B cell (primary cell): ENCODE measurements at regions of chr11 and their contacts with region 1.

Region 1: DNA sequence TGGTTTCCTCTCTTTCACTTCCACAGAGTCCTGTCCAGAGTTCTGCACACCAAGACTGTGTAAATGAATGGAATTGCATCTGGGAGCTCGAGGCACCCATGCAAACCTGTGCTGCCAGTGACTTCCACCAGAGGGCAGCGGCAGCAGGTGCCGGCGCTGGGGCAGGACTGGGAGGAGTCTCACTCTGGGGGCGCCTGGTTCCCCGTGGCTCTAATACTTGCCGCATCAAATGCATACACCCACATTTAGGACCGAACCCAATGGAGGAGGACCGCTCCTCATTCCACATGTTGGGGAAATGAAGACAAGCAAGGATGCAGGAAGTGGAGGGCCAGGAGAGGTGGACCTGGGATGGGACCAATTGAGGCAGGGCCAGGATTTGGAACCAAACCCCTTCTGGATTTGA is 1.1 kb upstream of the CD6 start:
- DNase-seq: peak; percentile 83
- ATAC-seq: peak; percentile 91
- H3K4me3 ChIP-seq: peak overlapping the region in 1 of 5 experiments; percentile 5
- H3K4me3 Mint-ChIP-seq: peak overlapping the region; percentile 79
- H3K27ac ChIP-seq: no peak overlapping the region
- H3K27ac Mint-ChIP-seq: peak overlapping the region; percentile 71
- H3K4me1 ChIP-seq: peaks cover 27 to 32% of the 10 kb centered on the region in 2 donors
- H3K4me1 Mint-ChIP-seq: peaks cover 34% of the 10 kb centered on the region
- H3K27me3 ChIP-seq: no peaks in the 10 kb centered on the region
- H3K27me3 Mint-ChIP-seq: no peaks in the 10 kb centered on the region
- CTCF ChIP-seq: peak; percentile 94

Region 2: DNA sequence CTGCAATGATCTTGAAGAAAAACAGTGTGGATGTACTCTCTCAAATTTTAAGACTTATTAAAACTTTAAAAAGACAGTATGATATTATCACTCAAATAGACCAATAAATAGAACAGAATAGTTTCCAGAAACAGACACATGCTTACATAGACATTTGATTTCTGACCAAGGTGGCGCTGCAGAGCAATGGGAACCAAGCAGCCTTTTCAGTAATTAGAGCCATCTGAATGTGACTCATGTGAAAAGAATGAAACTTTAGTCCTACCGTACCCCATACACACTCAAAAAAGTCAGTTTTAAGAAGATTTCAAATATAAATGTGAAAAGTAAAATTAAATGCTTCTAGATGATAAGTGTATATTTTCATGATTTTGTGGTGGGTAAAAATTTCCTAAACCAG is 345.1 kb before region 1 on chr11:
- CTCF ChIA-PET with region 1: no interaction called
- POLR2A ChIA-PET with region 1: no interaction called
- intact Hi-C with region 1: no loop called
- DNase-seq: no peak
- ATAC-seq: no peak
- H3K4me3 ChIP-seq: no peak overlapping the region
- H3K4me3 Mint-ChIP-seq: no peak overlapping the region
- H3K27ac ChIP-seq: no peak overlapping the region
- H3K27ac Mint-ChIP-seq: no peak overlapping the region
- H3K4me1 ChIP-seq: no peaks in the 10 kb centered on the region
- H3K4me1 Mint-ChIP-seq: peaks cover 7% of the 10 kb centered on the region
- H3K27me3 ChIP-seq: no peaks in the 10 kb centered on the region
- H3K27me3 Mint-ChIP-seq: no peaks in the 10 kb centered on the region
- CTCF ChIP-seq: no peak

Region 3: DNA sequence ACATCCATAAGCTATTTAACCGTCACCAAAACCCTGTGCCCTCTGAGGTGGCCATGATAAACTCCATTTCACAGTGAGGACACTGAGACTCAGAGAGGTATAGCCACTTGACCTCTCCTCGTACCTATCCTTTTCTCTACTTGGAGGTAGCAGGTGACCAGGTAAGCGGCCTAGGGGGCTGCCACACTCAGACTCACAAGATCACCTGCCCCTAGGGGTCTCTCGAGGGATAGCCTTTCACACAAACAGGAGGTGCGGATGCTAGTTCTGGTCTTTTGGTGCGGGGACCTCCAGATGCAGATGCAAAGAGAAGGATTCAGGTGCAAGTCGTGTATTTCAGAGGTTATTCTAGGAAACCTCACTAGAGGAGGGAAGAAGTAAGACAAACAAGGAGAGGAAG is 231.3 kb before region 1 on chr11:
- CTCF ChIA-PET with region 1: no interaction called
- POLR2A ChIA-PET with region 1: no interaction called
- intact Hi-C with region 1: no loop called
- DNase-seq: no peak
- ATAC-seq: no peak
- H3K4me3 ChIP-seq: no peak overlapping the region
- H3K4me3 Mint-ChIP-seq: no peak overlapping the region
- H3K27ac ChIP-seq: no peak overlapping the region
- H3K27ac Mint-ChIP-seq: no peak overlapping the region
- H3K4me1 ChIP-seq: no peaks in the 10 kb centered on the region
- H3K4me1 Mint-ChIP-seq: no peaks in the 10 kb centered on the region
- H3K27me3 ChIP-seq: peaks cover 0 to 8% (median 0%) of the 10 kb centered on the region in 4 experiments
- H3K27me3 Mint-ChIP-seq: peaks cover 29% of the 10 kb centered on the region
- CTCF ChIP-seq: no peak

Region 4: GRCh38 chr11:60951899-60952741 is 18.3 kb before region 1 on chr11 and contains the start of gene SLC15A3:
- CTCF ChIA-PET with region 1: interaction called, 7 read pairs
- POLR2A ChIA-PET with region 1: interaction called, 13 read pairs
- intact Hi-C with region 1: loop called (anchors 2 kb)
- DNase-seq: peak; percentile 91
- ATAC-seq: peak; percentile 88
- H3K4me3 ChIP-seq: peak within 1 kb of the TSS; percentile 53 to 99 (median 81)
- H3K4me3 Mint-ChIP-seq: peak within 1 kb of the TSS; percentile 90
- H3K27ac ChIP-seq: peak within 1 kb of the TSS; percentile 91 to 98
- H3K27ac Mint-ChIP-seq: peak within 1 kb of the TSS; percentile 94
- H3K4me1 ChIP-seq: peaks cover 48 to 62% of the 10 kb centered on the region in 2 donors
- H3K4me1 Mint-ChIP-seq: peaks cover 55% of the 10 kb centered on the region
- H3K27me3 ChIP-seq: no peaks in the 10 kb centered on the region
- H3K27me3 Mint-ChIP-seq: no peaks in the 10 kb centered on the region
- CTCF ChIP-seq: no peak
- total RNA-seq, gene SLC15A3: 91.4 and 93.0 TPM in 2 replicates

Region 5: DNA sequence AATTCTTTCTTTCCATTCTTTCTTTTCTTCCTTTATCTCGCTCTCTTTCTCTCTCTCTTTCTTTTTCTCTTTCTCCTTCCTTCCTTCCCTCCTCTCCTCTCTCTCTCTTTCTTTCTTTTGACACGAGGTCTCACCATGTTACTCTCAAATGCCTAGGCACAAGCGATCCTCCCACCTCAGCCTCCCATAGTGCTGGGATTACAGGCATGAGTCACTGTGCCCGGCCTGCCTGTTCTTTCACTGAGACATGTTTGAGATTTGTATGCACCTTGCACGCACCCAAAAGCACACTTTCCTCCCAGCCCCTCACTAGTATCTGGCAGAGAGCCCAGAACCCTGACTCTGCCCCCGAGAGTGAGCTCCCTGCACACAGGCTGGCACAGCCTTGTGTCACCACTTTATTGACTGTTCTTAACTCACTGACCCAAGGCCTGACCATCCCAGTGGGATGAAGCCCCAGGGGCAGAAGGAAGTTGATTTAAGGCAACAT is 57.9 kb after region 1 on chr11:
- CTCF ChIA-PET with region 1: interaction called, 13 read pairs
- POLR2A ChIA-PET with region 1: no interaction called
- intact Hi-C with region 1: no loop called
- DNase-seq: peak; percentile 62
- ATAC-seq: peak; percentile 88
- H3K4me3 ChIP-seq: no peak overlapping the region
- H3K4me3 Mint-ChIP-seq: peak overlapping the region; percentile 67
- H3K27ac ChIP-seq: no peak overlapping the region
- H3K27ac Mint-ChIP-seq: peak overlapping the region; percentile 76
- H3K4me1 ChIP-seq: peaks cover 40 to 45% of the 10 kb centered on the region in 2 donors
- H3K4me1 Mint-ChIP-seq: peaks cover 48% of the 10 kb centered on the region
- H3K27me3 ChIP-seq: no peaks in the 10 kb centered on the region
- H3K27me3 Mint-ChIP-seq: no peaks in the 10 kb centered on the region
- CTCF ChIP-seq: no peak

Region 6: DNA sequence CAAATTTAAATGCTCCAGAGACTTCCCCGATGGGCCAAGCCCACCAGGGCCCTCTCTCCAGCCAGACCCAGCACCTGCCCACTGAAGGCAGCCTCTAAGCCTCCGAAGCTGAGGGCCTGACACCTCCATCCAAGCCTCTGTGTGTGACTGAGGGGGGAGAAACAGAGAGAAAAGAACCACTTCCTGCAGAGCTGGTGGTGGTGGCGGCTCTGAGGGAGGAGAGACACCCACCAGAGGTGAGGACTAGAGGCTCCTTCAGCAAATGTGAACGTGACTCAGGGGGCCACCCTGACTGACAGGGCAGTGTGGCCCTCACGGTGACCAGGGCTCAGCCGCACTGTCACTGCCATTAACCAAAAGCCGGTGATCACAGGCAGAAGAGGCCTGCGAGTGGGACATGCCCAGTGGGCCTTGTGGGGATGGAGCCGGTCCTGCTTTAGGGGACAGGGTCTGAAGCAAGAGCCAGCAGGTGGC is 100.9 kb after region 1 on chr11:
- CTCF ChIA-PET with region 1: interaction called, 23 read pairs
- POLR2A ChIA-PET with region 1: interaction called, 4 read pairs
- intact Hi-C with region 1: loop called (anchors 1 kb)
- DNase-seq: peak; percentile 61
- ATAC-seq: peak; percentile 50
- H3K4me3 ChIP-seq: peak overlapping the region in 1 of 5 experiments; percentile 15
- H3K4me3 Mint-ChIP-seq: peak overlapping the region; percentile 68
- H3K27ac ChIP-seq: peak overlapping the region; percentile 91 to 98
- H3K27ac Mint-ChIP-seq: peak overlapping the region; percentile 97
- H3K4me1 ChIP-seq: peaks cover 40 to 49% of the 10 kb centered on the region in 2 donors
- H3K4me1 Mint-ChIP-seq: peaks cover 71% of the 10 kb centered on the region
- H3K27me3 ChIP-seq: no peaks in the 10 kb centered on the region
- H3K27me3 Mint-ChIP-seq: no peaks in the 10 kb centered on the region
- CTCF ChIP-seq: no peak

Region 7: GRCh38 chr11:61187505-61188130 is 217.2 kb after region 1 on chr11:
- CTCF ChIA-PET with region 1: interaction called, 53 read pairs
- POLR2A ChIA-PET with region 1: no interaction called
- intact Hi-C with region 1: no loop called
- DNase-seq: peak; percentile 89
- ATAC-seq: peak; percentile 98
- H3K4me3 ChIP-seq: no peak overlapping the region
- H3K4me3 Mint-ChIP-seq: no peak overlapping the region
- H3K27ac ChIP-seq: no peak overlapping the region
- H3K27ac Mint-ChIP-seq: no peak overlapping the region
- H3K4me1 ChIP-seq: no peaks in the 10 kb centered on the region
- H3K4me1 Mint-ChIP-seq: peaks cover 3% of the 10 kb centered on the region
- H3K27me3 ChIP-seq: no peaks in the 10 kb centered on the region
- H3K27me3 Mint-ChIP-seq: peaks cover 5% of the 10 kb centered on the region
- CTCF ChIP-seq: peak; percentile 99